ENCODE measurements at regions of chr2 and their contacts with region 1.

Region 1: GRCh38 chr2:132747046-132747445 is 77.0 kb upstream of the LYPD1 start:
- DNase-seq: no peak
- ATAC-seq: peak; percentile 91
- H3K4me3 ChIP-seq: no peak overlapping the region
- H3K27ac ChIP-seq: no peak overlapping the region
- H3K4me1 ChIP-seq: no peaks in the 10 kb centered on the region
- H3K27me3 ChIP-seq: no peaks in the 10 kb centered on the region
- CTCF ChIP-seq: no peak
- EP300 ChIP-seq: no peak
- POLR2A ChIP-seq: no peak
- RAD21 ChIP-seq: no peak

Region 2: DNA sequence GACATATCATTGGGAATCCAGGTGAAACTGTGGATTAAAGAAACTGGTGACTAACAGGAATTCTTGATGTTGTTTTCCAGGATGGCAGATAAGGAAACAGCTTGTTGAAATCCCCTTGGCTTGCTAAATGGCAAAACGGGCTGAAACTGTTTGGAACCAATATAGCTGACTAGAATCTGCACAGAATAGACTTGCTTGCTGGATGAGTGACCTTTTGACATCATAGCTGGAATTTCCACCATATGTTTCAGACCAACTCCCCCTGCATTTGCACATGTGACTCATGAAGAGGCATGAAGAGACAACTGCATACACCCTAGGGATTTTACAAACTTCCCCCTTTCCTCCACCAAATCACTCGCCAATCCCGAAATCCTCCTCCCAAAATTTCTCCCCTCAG is 10.6 kb after region 1 on chr2:
- CTCF ChIA-PET with region 1: interaction called, 9 read pairs
- POLR2A ChIA-PET with region 1: no interaction called
- RAD21 ChIA-PET with region 1: interaction called, 9 read pairs
- SMC1A ChIA-PET with region 1: interaction called, 19 read pairs
- in situ Hi-C with region 1: no loop called
- intact Hi-C with region 1: no loop called
- DNase-seq: no peak
- ATAC-seq: peak; percentile 45
- H3K4me3 ChIP-seq: no peak overlapping the region
- H3K27ac ChIP-seq: no peak overlapping the region
- H3K4me1 ChIP-seq: no peaks in the 10 kb centered on the region
- H3K27me3 ChIP-seq: no peaks in the 10 kb centered on the region
- CTCF ChIP-seq: no peak
- EP300 ChIP-seq: no peak
- POLR2A ChIP-seq: no peak
- RAD21 ChIP-seq: no peak

Region 3: DNA sequence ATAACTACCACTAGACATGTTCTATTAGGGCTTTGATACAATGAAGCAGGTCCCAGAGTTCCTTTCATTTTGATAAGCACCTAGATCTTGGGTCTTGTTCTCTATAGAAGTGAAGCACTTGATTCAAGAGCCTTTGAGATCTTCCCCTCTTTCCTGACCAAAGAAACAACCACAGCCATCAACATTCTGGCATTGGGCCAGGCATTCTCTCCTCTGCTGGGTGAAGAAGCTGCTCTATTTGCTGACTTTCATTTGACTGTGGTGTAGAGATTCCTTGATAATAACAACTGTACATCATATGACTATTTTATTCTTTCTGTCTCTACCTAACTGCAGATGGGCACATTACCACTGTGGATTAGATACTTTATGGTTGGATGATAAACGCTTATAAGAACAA is 19.5 kb after region 1 on chr2:
- CTCF ChIA-PET with region 1: interaction called, 9 read pairs
- POLR2A ChIA-PET with region 1: no interaction called
- RAD21 ChIA-PET with region 1: no interaction called
- SMC1A ChIA-PET with region 1: interaction called, 5 read pairs
- in situ Hi-C with region 1: no loop called
- intact Hi-C with region 1: loop called (anchors 2 kb)
- DNase-seq: no peak
- ATAC-seq: no peak
- H3K4me3 ChIP-seq: no peak overlapping the region
- H3K27ac ChIP-seq: no peak overlapping the region
- H3K4me1 ChIP-seq: no peaks in the 10 kb centered on the region
- H3K27me3 ChIP-seq: no peaks in the 10 kb centered on the region
- CTCF ChIP-seq: no peak
- EP300 ChIP-seq: no peak
- POLR2A ChIP-seq: no peak
- RAD21 ChIP-seq: no peak

Region 4: DNA sequence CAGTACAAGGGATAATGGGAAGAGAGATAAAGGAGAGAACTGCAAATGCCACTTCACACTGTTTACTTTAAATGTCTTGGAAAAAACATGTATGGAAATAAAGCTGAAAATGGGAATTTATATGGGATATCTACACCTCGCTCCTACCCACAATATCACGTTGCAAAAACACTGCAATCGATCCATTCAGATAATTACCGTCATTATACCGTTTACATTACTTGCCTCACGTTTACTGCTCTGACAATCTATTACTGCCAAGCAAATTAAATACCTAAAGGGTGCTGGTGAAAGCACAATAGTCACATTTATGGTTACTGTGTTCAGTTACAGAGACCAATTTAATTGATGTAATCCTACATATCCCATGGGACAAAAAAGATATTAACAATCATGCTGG is 137.7 kb after region 1 on chr2:
- CTCF ChIA-PET with region 1: no interaction called
- POLR2A ChIA-PET with region 1: no interaction called
- RAD21 ChIA-PET with region 1: no interaction called
- SMC1A ChIA-PET with region 1: no interaction called
- in situ Hi-C with region 1: no loop called
- intact Hi-C with region 1: no loop called
- DNase-seq: no peak
- ATAC-seq: no peak
- H3K4me3 ChIP-seq: no peak overlapping the region
- H3K27ac ChIP-seq: no peak overlapping the region
- H3K4me1 ChIP-seq: no peaks in the 10 kb centered on the region
- H3K27me3 ChIP-seq: no peaks in the 10 kb centered on the region
- CTCF ChIP-seq: no peak
- EP300 ChIP-seq: no peak
- POLR2A ChIP-seq: no peak
- RAD21 ChIP-seq: no peak

Measured in GM12878 (cell line).